BJ (cell line): ENCODE measurements at regions of chr18 and their contacts with region 1.

Region 1: DNA sequence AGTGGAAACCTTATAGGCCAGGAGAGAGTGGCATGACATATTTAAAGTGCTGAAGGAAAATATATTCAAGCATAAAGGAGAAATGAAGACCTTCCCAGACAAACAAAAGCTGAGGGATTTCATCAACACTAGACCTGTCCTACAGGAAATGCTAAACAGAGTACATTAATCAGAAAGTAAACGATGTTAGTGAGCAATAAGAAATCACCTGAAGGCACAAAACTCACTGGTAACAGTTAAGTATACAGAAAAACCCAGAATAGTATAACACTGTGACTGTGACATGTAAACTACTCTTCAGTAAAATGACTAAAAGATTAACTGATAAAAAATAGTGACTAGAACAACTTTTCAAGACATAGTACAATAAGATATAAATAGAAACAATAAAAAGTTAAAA is 87.4 kb downstream of the ATP8B1 start:
- DNase-seq: no peak
- H3K4me3 ChIP-seq: no peak overlapping the region
- H3K27me3 ChIP-seq: no peaks in the 10 kb centered on the region
- CTCF ChIP-seq: no peak

Region 2: GRCh38 chr18:57687970-57688369 is 27.7 kb before region 1 on chr18:
- CTCF ChIA-PET with region 1: no interaction called
- POLR2A ChIA-PET with region 1: interaction called, 14 read pairs
- DNase-seq: no peak
- H3K4me3 ChIP-seq: no peak overlapping the region
- H3K27me3 ChIP-seq: no peaks in the 10 kb centered on the region
- CTCF ChIP-seq: no peak

Region 3: GRCh38 chr18:57975805-57976204 is 260.1 kb after region 1 on chr18:
- CTCF ChIA-PET with region 1: no interaction called
- POLR2A ChIA-PET with region 1: interaction called, 15 read pairs
- DNase-seq: no peak
- H3K4me3 ChIP-seq: no peak overlapping the region
- H3K27me3 ChIP-seq: peaks cover 9% of the 10 kb centered on the region
- CTCF ChIP-seq: no peak